ENCODE measurements at regions of chr22 and their contacts with region 1.

Region 1: GRCh38 chr22:20803696-20804324 is 29.9 kb downstream of the SERPIND1 start:
- DNase-seq: peak in 4 of 7 donors; percentile 25 to 41 (median 30)
- H3K4me3 ChIP-seq: no peak overlapping the region
- H3K27ac ChIP-seq: no peak overlapping the region
- H3K4me1 ChIP-seq: no peaks in the 10 kb centered on the region
- H3K27me3 ChIP-seq: no peaks in the 10 kb centered on the region
- CTCF ChIP-seq: peak in 5 of 6 experiments; percentile 8 to 40 (median 31)
- POLR2A ChIP-seq: no peak

Region 2: GRCh38 chr22:20867179-20868024 is 63.6 kb after region 1 on chr22:
- intact Hi-C with region 1: loop called in 1 of 2 experiments (anchors 10 kb)
- DNase-seq: peak; percentile 44 to 80 (median 66)
- H3K4me3 ChIP-seq: no peak overlapping the region
- H3K27ac ChIP-seq: peak overlapping the region in 4 of 5 donors; percentile 25 to 93 (median 75)
- H3K4me1 ChIP-seq: peaks cover 12 to 47% of the 10 kb centered on the region in 2 donors
- H3K27me3 ChIP-seq: no peaks in the 10 kb centered on the region
- CTCF ChIP-seq: no peak
- POLR2A ChIP-seq: peak in 1 of 2 donors; percentile 11